ENCODE measurements at regions of chr16 and their contacts with region 1.

Region 1: GRCh38 chr16:14042706-14043105 is 28.4 kb upstream of the MRTFB start:
- DNase-seq: no peak
- H3K4me3 ChIP-seq: no peak overlapping the region
- H3K27ac ChIP-seq: peak overlapping the region; percentile 61 to 67
- H3K4me1 ChIP-seq: no peaks in the 10 kb centered on the region
- H3K27me3 ChIP-seq: no peaks in the 10 kb centered on the region
- CTCF ChIP-seq: no peak
- POLR2A ChIP-seq: no peak

Region 2: DNA sequence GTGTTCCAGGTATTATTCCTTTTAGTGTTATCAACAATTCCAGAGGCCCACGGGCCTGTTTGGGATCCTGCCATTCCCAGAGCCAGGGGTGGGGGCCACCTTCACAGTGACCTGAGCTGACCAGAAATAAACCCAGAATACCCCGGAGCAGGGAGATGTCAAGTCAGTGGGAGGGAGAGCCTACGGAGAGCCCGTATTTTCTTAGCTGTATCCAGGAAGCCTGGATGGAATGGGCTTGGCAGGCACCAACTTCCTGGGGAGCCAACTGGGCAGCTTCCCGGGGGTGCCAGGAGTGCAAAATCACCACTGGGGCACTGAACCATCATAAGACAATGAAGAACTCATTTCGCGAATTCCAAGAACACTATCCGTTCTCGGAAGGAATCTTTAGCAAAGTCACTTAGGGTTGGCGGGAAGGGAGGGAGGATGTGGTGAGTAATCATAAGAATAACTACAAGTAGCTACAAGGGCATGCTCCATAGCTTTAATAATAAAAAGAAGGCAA is 15.2 kb after region 1 on chr16:
- intact Hi-C with region 1: loop called (anchors 2 kb)
- DNase-seq: peak in 1 of 2 donors; percentile 59
- H3K4me3 ChIP-seq: no peak overlapping the region
- H3K27ac ChIP-seq: peak overlapping the region; percentile 65 to 70
- H3K4me1 ChIP-seq: no peaks in the 10 kb centered on the region
- H3K27me3 ChIP-seq: no peaks in the 10 kb centered on the region
- CTCF ChIP-seq: no peak
- POLR2A ChIP-seq: no peak

Region 3: GRCh38 chr16:14963380-14964173 is 920.9 kb after region 1 on chr16:
- intact Hi-C with region 1: loop called (anchors 10 kb)
- DNase-seq: no peak
- H3K4me3 ChIP-seq: no peak overlapping the region
- H3K27ac ChIP-seq: no peak overlapping the region
- H3K4me1 ChIP-seq: no peaks in the 10 kb centered on the region
- H3K27me3 ChIP-seq: no peaks in the 10 kb centered on the region
- CTCF ChIP-seq: no peak
- POLR2A ChIP-seq: no peak

Measured in breast epithelium (tissue), 4 donors.